PC-3 (cell line): ENCODE measurements at regions of chr3 and their contacts with region 1.

Region 1: GRCh38 chr3:86793786-86794185 is 197.2 kb downstream of the VGLL3 start:
- DNase-seq: peak; percentile 96
- ATAC-seq: peak; percentile 100
- H3K4me3 ChIP-seq: peak overlapping the region; percentile 33
- H3K27ac ChIP-seq: peak overlapping the region; percentile 80
- H3K4me1 ChIP-seq: peaks cover 22% of the 10 kb centered on the region
- H3K27me3 ChIP-seq: no peaks in the 10 kb centered on the region
- CTCF ChIP-seq: no peak

Region 2: DNA sequence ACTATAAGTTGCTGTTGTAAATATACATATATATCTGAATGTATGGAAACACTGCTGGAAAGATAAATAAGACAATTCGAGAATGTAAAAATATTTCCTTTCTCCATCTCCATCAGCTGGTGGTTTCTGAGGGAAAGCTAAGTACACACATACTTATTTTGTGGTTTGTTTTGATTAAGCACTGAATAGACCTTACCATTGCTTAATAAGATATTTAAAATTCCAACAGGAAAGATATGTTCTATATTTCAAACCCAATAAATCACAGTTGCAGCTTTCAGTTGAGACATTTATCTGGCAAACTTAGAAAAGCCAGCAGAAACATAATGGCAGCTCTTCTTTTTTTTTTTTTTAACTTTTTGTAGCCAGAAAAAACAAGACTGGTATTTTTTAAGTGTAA is 36.8 kb after region 1 on chr3:
- CTCF ChIA-PET with region 1: no interaction called
- POLR2A ChIA-PET with region 1: no interaction called
- intact Hi-C with region 1: no loop called
- DNase-seq: no peak
- ATAC-seq: no peak
- H3K4me3 ChIP-seq: no peak overlapping the region
- H3K27ac ChIP-seq: no peak overlapping the region
- H3K4me1 ChIP-seq: no peaks in the 10 kb centered on the region
- H3K27me3 ChIP-seq: no peaks in the 10 kb centered on the region
- CTCF ChIP-seq: no peak

Region 3: GRCh38 chr3:86990734-86991481 is 197.1 kb after region 1 on chr3 and contains the start of gene VGLL3:
- CTCF ChIA-PET with region 1: no interaction called
- POLR2A ChIA-PET with region 1: no interaction called
- intact Hi-C with region 1: loop called (anchors 5 kb)
- DNase-seq: peak; percentile 55
- ATAC-seq: peak; percentile 70
- H3K4me3 ChIP-seq: peak within 1 kb of the TSS; percentile 85
- H3K27ac ChIP-seq: peak within 1 kb of the TSS; percentile 4; the same call in 1 of the 2 replicates
- H3K4me1 ChIP-seq: peaks cover 42% of the 10 kb centered on the region
- H3K27me3 ChIP-seq: no peaks in the 10 kb centered on the region
- CTCF ChIP-seq: 0 out of 2 replicates have a peak, but pooled peaks have one; percentile 10
- total RNA-seq, gene VGLL3: 1.3 and 1.8 TPM in 2 replicates